Activated naive CD4-positive, alpha-beta T cell treated with anti-CD3 and anti-CD28 coated beads for 36 hours (primary cell): ENCODE measurements at regions of chr6 and their contacts with region 1.

Region 1: GRCh38 chr6:169723200-169723909 is 945 bp downstream of the PHF10 start:
- DNase-seq: peak; percentile 62
- H3K4me3 Mint-ChIP-seq: peak overlapping the region; percentile 84
- H3K27ac Mint-ChIP-seq: peak overlapping the region; percentile 94
- H3K4me1 Mint-ChIP-seq: peaks cover 43% of the 10 kb centered on the region
- H3K27me3 Mint-ChIP-seq: no peaks in the 10 kb centered on the region

Region 2: GRCh38 chr6:169589293-169589692 is 134.1 kb before region 1 on chr6:
- CTCF ChIA-PET with region 1: no interaction called
- intact Hi-C with region 1: loop called (anchors 1 kb)
- DNase-seq: peak; percentile 58
- H3K4me3 Mint-ChIP-seq: no peak overlapping the region
- H3K27ac Mint-ChIP-seq: no peak overlapping the region
- H3K4me1 Mint-ChIP-seq: peaks cover 16% of the 10 kb centered on the region
- H3K27me3 Mint-ChIP-seq: no peaks in the 10 kb centered on the region

Region 3: DNA sequence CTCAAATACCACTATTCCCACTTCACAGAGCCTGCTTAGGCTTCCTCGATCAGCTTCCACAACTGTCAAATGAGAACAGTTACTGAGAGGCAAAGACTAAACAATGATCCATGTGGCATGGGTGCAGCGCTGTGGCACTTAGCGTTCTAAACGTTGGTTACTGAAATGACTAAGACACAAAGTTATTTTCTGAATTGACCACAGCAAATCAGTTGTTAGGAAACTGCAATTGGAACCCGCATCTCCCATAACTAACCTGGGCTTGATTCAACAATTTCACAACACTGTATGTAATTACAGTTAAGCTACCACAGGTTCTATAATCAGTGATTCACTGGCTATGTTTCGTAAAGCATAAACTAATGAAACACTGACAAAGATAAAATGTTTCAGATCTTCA is 34.1 kb before region 1 on chr6:
- CTCF ChIA-PET with region 1: no interaction called
- intact Hi-C with region 1: no loop called
- DNase-seq: no peak
- H3K4me3 Mint-ChIP-seq: no peak overlapping the region
- H3K27ac Mint-ChIP-seq: no peak overlapping the region
- H3K4me1 Mint-ChIP-seq: no peaks in the 10 kb centered on the region
- H3K27me3 Mint-ChIP-seq: no peaks in the 10 kb centered on the region

Region 4: DNA sequence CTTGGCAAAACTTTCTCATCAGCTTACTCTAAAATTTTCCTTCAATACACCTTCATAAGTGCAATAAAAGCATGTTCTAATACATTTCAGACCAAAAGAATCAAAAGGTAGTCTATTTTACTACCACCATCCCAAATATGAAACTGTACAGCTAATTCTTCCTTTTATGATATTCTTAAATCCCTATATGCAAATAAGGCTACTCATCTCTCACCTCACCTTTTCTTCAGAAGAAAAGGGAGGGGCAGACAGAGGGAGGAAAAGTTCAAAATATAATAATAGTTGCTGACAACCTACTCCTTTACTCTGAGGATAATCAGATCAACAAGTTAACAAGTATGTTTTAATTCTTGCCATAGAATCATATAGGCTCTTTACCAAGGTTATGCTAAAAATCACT is 14.1 kb before region 1 on chr6:
- CTCF ChIA-PET with region 1: interaction called, 4 read pairs
- intact Hi-C with region 1: loop called (anchors 1 kb)
- DNase-seq: no peak
- H3K4me3 Mint-ChIP-seq: no peak overlapping the region
- H3K27ac Mint-ChIP-seq: peak overlapping the region; percentile 44
- H3K4me1 Mint-ChIP-seq: peaks cover 36% of the 10 kb centered on the region
- H3K27me3 Mint-ChIP-seq: no peaks in the 10 kb centered on the region